IMR-90 (cell line): ENCODE measurements at regions of chr17 and their contacts with region 1.

Region 1: DNA sequence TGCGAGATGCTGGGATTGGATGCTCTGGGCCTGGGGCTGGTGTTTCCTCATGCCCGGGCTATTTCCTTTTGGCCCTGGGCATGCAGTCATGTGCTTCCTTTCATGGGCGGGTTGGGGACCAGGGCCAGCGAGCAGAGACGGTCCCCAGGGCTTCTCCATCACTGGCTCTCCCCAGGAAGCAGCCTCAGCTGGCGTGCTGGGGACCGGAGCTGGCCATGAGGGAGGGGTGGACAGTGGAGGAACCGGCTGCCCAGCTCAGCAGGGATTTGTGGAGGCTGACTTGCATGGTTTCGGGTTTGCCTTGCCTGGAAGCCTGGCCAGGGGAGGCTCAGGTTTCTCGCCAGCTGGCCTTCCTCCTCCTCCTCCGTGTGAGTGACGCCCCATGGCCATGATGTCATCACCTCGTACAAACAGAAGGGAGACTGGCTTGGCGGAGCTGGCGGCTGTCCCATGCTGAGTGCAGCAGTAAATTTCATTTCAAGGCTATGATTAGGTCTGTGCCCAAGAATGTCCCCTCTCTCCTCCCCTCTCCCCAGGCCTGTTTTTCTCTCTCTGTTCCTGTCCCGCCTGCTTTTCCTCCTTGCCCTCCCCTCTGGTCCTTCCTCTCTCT is 8.9 kb upstream of the TIMP2 start:
- DNase-seq: peak; percentile 100
- ATAC-seq: peak; percentile 66
- H3K4me3 ChIP-seq: peak overlapping the region; percentile 6; the same call in 1 of the 2 replicates
- H3K27ac ChIP-seq: peak overlapping the region; percentile 88
- H3K4me1 ChIP-seq: peaks cover 28% of the 10 kb centered on the region
- H3K27me3 ChIP-seq: no peaks in the 10 kb centered on the region
- CTCF ChIP-seq: no peak
- POLR2A ChIP-seq: peak; percentile 86
- RAD21 ChIP-seq: no peak; the same call in 1 of the 2 replicates

Region 2: DNA sequence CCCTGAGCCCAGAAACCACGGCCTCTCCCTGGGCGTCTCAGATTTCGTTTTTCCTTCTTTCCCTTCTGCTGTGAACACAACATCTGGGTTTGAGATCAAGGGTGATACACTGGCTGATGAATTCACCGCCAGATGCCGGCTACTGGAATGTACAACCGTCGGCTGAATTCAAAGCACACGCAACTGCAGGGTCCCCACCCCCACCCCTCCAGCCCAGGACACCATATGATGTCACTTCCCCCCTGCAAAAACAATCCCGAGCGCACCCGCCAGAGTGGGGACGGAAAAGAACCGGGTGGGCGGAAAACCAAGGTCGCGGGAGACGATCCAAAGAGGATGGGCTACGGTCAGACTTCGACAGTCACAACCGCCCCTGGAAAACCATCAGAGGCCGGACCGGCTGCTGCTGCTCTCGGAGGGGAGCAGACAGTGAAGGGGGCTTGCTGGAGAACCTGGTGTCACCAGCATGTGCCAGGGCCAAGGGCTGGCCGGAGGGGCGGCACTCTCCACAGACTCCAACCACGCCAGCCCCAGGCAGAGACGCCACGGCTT is 54.4 kb before region 1 on chr17:
- CTCF ChIA-PET with region 1: no interaction called
- POLR2A ChIA-PET with region 1: no interaction called
- dilution Hi-C with region 1: no loop called
- in situ Hi-C with region 1: no loop called
- intact Hi-C with region 1: loop called (anchors 1 kb)
- DNase-seq: peak; percentile 98
- ATAC-seq: peak; percentile 47
- H3K4me3 ChIP-seq: no peak overlapping the region
- H3K27ac ChIP-seq: peak overlapping the region; percentile 92
- H3K4me1 ChIP-seq: peaks cover 55% of the 10 kb centered on the region
- H3K27me3 ChIP-seq: no peaks in the 10 kb centered on the region
- CTCF ChIP-seq: no peak
- POLR2A ChIP-seq: peak; percentile 35; the same call in 1 of the 2 replicates
- RAD21 ChIP-seq: peak; percentile 23; the same call in 1 of the 2 replicates

Region 3: DNA sequence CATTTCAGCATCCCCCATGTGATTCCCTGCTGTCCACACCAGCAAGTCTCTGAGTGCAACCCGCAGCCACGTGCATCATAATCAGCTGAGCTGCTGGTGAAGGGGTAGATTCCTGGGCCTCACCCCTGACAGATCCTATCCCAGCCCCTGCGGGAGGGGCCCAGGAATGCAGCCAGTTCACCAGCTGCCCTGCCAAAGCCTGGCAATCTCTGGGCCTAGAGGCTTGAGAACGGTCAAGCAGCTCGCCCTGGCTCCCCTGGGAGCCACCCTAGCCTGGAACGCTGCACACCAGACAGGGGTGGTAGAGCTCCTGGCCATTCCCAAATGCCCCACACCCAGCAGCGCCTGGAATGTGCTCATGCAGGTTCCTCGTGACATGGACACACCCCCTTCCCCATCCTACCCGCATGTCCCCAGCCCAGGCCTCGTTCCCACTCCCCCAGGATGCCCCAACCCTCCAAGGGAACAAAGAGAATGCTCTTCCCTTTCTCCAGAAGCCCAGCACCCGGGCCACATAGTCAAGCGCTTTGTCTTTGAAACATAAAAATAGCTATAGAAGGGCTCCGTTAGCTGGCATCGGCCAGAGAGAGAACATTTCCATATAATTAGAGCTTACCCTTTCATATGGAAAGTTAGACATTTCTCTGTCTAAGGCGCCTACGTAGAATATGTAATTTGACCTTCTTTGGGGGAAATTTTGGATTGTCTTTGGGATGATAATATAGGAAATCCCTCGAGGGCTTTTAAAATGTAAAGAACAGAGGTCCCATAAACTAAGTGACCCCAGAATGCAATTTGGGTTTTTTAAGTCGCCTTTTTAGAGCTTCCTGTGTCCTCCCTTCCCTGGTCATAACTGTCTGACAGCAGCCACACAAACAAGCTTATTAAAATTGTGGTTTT is 34.5 kb before region 1 on chr17:
- CTCF ChIA-PET with region 1: no interaction called
- POLR2A ChIA-PET with region 1: no interaction called
- dilution Hi-C with region 1: no loop called
- in situ Hi-C with region 1: no loop called
- intact Hi-C with region 1: no loop called
- DNase-seq: no peak
- ATAC-seq: peak; percentile 10
- H3K4me3 ChIP-seq: no peak overlapping the region
- H3K27ac ChIP-seq: no peak overlapping the region
- H3K4me1 ChIP-seq: peaks cover 29% of the 10 kb centered on the region
- H3K27me3 ChIP-seq: no peaks in the 10 kb centered on the region
- CTCF ChIP-seq: no peak
- POLR2A ChIP-seq: no peak
- RAD21 ChIP-seq: no peak

Region 4: DNA sequence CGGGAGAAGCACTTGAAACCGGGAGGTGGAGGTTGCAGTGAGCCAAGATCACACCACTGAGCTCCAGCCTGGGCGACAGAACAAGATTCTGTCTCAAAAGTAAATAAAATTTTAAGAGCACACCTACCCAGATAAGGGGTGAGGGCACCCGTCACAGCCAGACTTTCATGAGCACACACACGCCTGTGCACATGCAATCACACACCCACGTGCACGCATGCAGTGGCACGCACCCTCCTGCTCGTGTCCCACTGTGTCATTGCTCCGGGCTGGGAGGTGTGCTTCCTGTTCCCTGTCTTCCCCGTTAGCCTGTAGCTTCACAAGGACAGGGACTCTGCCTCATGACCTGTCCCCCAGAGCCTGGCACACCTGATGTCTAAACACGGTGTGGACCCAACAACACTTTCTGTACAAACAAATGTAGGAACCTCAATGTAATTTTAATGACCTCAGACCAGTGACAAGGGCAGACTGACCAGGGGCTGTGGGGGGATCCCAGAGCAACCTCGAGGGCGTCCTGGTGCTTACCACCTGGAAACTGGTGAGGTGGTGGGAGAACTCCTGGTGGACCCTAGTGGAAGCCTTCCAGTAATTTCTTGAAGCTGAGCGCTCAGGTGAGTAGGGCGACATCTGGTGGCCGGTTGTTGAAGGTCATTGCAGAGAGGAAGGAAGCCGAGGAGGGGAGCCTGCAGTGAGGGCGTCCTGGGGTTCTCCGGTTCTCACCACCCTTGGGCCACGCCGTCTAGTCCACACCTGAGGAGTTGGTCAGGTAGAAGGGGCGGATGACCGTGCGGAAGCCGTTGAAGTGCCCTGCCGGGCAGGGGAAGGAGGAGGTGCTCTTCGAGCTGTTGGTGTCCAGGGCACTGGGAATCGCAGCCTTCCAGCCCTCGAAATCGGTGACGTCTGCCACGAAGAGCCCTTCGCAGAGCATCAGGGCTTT is 37.0 kb after region 1 on chr17:
- CTCF ChIA-PET with region 1: interaction called, 5 read pairs
- POLR2A ChIA-PET with region 1: interaction called, 5 read pairs
- dilution Hi-C with region 1: no loop called
- in situ Hi-C with region 1: no loop called
- intact Hi-C with region 1: loop called (anchors 2 kb)
- DNase-seq: peak; percentile 72
- ATAC-seq: peak; percentile 37
- H3K4me3 ChIP-seq: no peak overlapping the region
- H3K27ac ChIP-seq: no peak overlapping the region; the same call in 1 of the 2 replicates
- H3K4me1 ChIP-seq: peaks cover 19% of the 10 kb centered on the region
- H3K27me3 ChIP-seq: no peaks in the 10 kb centered on the region
- CTCF ChIP-seq: peak; percentile 90
- POLR2A ChIP-seq: no peak
- RAD21 ChIP-seq: peak; percentile 94

Region 5: DNA sequence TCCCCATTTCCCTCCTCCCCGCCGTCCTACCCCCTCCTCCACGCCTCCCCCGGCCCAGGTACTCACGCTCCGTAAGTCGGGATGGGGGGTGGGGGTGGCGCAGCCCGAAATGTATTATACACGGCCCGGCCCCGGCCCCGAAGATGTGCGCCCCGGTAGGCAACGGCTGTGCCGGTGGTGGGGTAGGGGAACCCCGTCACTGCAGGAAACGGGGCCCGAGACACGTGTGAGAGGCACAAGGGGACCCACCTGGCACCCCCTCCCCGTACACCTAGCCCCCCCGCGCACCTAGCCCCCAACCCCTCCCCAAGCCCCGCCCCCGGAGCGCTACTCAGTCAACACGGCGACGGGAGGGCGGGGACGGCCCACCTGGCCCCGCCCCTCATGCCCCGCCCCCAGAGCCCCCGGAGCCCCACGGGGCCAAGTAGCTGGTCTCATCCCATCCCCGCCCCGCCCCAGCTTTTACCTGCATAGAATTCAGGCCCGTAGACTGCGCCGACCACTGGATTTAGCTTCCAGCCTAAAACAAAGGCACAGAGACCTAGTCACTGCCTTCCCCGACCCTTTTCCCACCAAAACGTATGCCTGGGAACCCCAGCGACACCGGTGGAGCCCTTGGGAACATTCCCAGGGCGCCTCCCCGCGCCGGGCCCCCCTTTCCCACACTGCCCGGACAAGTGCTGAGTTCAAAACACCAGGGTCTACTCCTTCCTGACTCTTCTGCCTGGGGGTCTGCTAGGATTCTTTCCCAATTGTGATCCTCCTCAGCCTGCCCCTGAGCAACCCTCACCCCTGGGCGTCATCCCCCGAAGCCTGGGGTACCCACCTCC is 163.4 kb after region 1 on chr17:
- CTCF ChIA-PET with region 1: no interaction called
- POLR2A ChIA-PET with region 1: no interaction called
- dilution Hi-C with region 1: no loop called
- in situ Hi-C with region 1: no loop called
- intact Hi-C with region 1: no loop called
- DNase-seq: no peak
- ATAC-seq: no peak
- H3K4me3 ChIP-seq: no peak overlapping the region
- H3K27ac ChIP-seq: no peak overlapping the region
- H3K4me1 ChIP-seq: no peaks in the 10 kb centered on the region
- H3K27me3 ChIP-seq: peaks cover 75% of the 10 kb centered on the region
- CTCF ChIP-seq: no peak
- POLR2A ChIP-seq: no peak
- RAD21 ChIP-seq: no peak